Activated T-helper 1 cell treated with anti-CD3 and anti-CD28 coated beads, Interleukin-12 subunit alpha, Interleukin-12 subunit beta, Interleukin-2, Interleukin-4 antibody, amounts not matched to agents 30 ng/mL and 10 ng/mL and 1 ng/mL, durations not matched to agents 14 hours and 24 hours and 36 hours (primary cell): ENCODE measurements at regions of chr3 and their contacts with region 1.

Region 1: GRCh38 chr3:52291508-52292181 is 4.0 kb downstream of the GLYCTK start:
- DNase-seq: no peak
- H3K4me3 Mint-ChIP-seq: no peak overlapping the region
- H3K27ac Mint-ChIP-seq: no peak overlapping the region
- H3K4me1 Mint-ChIP-seq: peaks cover 27% of the 10 kb centered on the region
- H3K27me3 Mint-ChIP-seq: no peaks in the 10 kb centered on the region

Region 2: DNA sequence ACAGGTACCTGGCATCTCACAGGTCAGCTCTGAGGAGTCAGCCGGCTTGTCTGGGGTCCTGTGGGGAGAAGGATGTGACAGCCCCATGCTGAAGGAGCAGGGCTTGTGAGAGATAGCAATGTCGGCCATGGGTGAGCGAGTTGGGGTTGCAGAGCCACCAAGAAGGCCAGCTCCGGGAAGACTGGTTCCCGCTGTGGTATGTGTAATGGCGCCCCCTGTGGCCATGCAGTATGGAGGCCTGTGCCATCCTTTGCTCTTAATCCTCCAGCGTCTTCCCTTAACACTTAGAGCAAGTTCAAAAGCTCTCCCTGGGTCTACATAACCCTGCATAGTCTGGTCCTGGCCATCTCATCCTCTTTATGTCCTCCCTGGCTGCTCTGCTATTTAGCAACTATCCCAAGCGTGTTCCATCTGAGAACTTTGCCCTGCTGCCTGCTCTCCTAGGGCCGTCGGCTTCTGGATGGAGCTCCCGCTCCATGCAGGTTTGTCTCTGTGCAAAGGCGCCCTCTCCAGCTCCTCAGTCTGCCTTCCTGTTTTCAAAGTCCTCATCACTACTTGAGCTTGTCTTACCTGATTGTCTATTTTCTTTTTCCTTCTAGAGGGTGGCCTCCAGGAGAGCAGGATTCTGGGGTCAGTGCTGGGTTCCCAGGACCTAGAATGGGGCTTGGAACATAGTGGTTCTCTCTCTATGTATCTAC is 471.8 kb before region 1 on chr3:
- intact Hi-C with region 1: no loop called
- DNase-seq: no peak
- H3K4me3 Mint-ChIP-seq: no peak overlapping the region
- H3K27ac Mint-ChIP-seq: no peak overlapping the region
- H3K4me1 Mint-ChIP-seq: no peaks in the 10 kb centered on the region
- H3K27me3 Mint-ChIP-seq: peaks cover 10% of the 10 kb centered on the region

Region 3: GRCh38 chr3:51995346-51996163 is 296.1 kb before region 1 on chr3 and contains the start of gene RPL29:
- intact Hi-C with region 1: loop called (anchors 2 kb)
- DNase-seq: peak; percentile 88
- H3K4me3 Mint-ChIP-seq: peak within 1 kb of the TSS; percentile 98
- H3K27ac Mint-ChIP-seq: peak within 1 kb of the TSS; percentile 100
- H3K4me1 Mint-ChIP-seq: peaks cover 24% of the 10 kb centered on the region
- H3K27me3 Mint-ChIP-seq: peaks cover 5% of the 10 kb centered on the region
- total RNA-seq, gene RPL29: 1,590 and 1,596 TPM in 2 replicates

Region 4: DNA sequence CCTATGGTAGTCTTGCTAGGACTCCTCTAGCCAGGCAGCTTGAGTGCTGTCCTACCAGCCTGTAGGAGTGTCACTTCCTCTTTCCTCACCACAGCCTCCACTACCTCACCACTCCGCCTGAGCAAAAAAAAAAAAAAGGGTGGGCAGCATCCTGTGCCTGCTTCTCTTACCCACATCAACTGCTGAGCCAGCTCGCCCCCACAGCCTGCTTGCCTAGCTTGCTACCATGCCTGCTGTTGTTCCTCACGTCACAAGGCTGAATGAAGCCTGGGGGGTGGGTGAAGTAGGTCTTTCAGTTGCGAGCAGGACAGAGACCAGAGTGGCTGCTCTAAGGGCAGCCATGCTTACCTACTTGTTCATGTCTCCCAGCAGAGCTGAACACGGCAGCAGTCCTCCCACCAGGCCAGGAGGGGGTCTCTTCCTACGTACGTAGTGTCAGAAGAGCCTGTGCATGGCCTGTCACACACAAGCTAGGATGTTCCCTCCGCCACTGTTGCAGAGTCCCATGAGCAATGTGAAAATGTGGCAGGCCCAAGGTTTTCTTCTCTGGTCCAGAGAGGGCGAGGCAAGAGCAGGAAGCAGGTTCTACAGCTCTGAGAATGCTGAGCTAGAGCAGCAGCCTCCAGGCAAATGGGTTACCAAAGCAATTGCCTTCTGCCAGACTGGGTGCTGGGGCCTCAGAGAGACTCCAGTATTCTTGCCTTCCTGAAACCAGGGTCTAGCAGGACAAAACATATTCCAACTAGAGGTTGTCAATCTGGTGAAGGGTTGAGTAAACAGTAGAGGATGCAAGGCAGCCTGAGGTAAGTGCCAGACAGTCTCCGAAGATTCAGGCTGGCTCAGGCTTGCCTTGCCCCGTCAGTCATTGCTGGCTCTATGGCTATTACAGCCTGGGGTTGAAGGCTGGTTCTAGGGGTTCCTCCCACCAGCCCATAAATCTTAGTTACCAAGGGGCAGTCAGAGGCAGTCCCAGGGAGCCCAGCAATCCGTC is 38.0 kb before region 1 on chr3:
- intact Hi-C with region 1: loop called (anchors 1 kb)
- DNase-seq: peak; percentile 82
- H3K4me3 Mint-ChIP-seq: peak overlapping the region; percentile 86
- H3K27ac Mint-ChIP-seq: peak overlapping the region; percentile 99
- H3K4me1 Mint-ChIP-seq: peaks cover 81% of the 10 kb centered on the region
- H3K27me3 Mint-ChIP-seq: no peaks in the 10 kb centered on the region

Region 5: DNA sequence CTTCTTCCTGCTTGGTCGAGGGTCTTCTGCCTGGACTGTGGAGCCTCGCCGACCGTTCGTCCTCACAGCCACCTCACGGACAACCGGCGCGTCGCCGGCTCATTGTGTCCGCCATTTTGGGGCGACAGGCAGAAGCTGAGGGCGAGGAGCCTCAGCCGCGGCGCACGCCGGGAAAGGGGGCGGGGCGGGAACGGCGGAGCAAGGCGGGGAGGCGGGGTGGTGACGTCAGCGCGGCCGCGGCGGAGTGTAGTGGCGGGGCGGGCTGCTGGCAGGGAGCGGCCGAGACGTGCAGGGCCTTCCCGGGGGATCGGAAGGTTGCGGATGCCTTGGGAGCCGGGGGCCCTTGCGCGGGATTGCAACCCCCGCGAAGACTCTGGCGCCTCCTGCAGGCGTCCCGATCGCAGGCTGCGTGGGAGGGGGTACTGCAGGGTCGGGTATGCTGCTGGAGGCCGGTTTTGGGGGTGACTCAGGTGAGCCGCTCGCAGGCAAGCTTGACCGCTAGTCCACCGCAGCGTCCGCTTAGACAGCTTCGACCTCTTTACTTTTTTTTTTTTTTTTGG is 13.1 kb before region 1 on chr3 and contains the start of gene WDR82:
- intact Hi-C with region 1: loop called (anchors 1 kb)
- DNase-seq: peak; percentile 95
- H3K4me3 Mint-ChIP-seq: peak within 1 kb of the TSS; percentile 97
- H3K27ac Mint-ChIP-seq: peak within 1 kb of the TSS; percentile 99
- H3K4me1 Mint-ChIP-seq: peaks cover 70% of the 10 kb centered on the region
- H3K27me3 Mint-ChIP-seq: no peaks in the 10 kb centered on the region
- total RNA-seq, gene WDR82: 105 and 107 TPM in 2 replicates

Region 6: DNA sequence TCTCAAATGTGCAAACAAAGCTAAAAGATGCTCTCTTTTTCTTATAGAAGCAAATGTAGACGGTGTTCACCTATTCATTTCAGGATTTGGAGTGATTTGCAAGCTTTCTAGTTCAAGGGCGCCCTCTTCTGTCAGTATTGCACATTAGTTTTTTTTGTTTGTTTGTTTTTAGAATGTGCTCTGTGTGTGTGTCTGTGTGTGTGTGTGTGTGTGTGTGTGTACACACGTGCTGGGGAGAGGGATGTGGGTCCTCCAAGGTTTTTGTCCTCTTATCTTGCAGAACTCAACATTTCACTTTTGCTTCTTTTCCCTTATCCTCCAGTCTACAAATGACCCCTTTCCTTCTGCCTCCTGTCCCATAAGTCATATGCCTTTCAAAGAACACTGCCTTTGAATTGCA is 48.0 kb after region 1 on chr3:
- intact Hi-C with region 1: loop called (anchors 1 kb)
- DNase-seq: peak; percentile 40
- H3K4me3 Mint-ChIP-seq: no peak overlapping the region
- H3K27ac Mint-ChIP-seq: no peak overlapping the region
- H3K4me1 Mint-ChIP-seq: no peaks in the 10 kb centered on the region
- H3K27me3 Mint-ChIP-seq: no peaks in the 10 kb centered on the region

Region 7: DNA sequence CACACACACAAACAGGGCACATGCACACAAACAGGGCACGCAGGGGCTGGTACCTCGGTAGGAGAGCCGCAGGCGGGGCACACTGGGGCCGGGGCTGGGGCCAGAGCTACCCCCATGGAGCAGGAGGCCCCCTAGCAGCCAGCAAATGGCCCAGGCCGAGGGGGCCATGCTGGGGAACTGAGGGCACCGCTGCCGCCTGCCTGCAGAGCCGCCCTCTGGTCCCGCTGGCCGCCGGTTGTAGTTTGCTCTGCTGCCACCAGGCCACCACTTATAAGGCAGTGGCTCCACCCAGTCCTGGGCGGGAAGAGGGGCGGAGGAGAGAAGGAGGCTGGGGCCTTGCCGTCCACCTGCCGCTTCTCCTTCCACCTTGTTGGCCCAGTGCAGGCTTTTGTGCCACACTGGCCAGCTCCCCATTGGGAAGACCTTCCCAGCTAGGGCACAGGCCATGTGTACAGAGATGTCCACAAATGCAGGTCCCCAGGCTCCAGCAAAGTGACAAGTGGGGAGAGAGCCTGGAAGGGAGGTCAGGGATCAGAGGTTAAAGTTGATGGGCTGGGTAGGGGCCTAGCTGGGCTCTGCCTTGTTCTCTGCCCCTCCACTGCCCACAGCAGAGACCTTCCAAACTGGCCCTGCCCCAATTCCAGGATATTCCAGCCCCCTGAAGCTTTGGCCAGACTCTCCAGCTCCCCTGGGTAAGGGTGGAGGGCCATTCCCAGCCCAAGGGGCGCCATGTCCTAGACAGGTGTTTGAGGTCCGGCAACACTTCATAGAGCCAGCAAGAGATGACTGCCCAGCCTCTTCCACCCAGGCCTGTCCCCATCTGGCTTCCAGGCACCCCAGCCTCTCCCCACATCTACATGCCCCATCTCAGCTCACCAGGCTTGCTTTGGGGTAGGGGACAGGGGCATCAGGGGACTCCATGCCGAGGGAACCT is 153.5 kb after region 1 on chr3 and contains the start of gene SEMA3G:
- intact Hi-C with region 1: no loop called
- DNase-seq: peak; percentile 70
- H3K4me3 Mint-ChIP-seq: no peak within 1 kb of the TSS
- H3K27ac Mint-ChIP-seq: no peak within 1 kb of the TSS
- H3K4me1 Mint-ChIP-seq: peaks cover 7% of the 10 kb centered on the region
- H3K27me3 Mint-ChIP-seq: no peaks in the 10 kb centered on the region
- total RNA-seq, gene SEMA3G: 0.13 TPM in 1 of 2 replicates, not detected in the other